ENCODE measurements at regions of chr12 and their contacts with region 1.

Region 1: DNA sequence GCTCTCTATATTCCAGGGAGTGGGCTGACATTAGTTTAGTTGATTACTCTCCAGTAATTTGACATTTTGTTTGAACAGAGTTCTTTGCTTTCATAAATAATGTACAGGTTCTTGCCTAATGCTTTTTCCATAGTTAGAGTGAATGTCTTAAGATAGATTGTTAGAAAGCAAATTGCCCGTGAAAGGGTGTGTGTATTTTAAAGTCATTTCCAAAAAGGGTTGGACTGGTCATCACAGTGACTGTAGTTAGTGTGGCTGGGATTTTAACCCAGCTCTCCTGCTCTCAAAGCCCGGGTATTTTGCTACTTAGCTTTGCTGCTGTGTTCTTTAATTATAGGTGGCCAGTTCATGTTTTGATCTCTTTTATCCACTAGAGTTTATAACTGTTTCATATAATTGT is 74.2 kb downstream of the DNAH10 start:
- DNase-seq: no peak
- ATAC-seq: no peak
- H3K4me3 ChIP-seq: no peak overlapping the region
- H3K27ac ChIP-seq: no peak overlapping the region
- H3K4me1 ChIP-seq: peaks cover 18% of the 10 kb centered on the region
- H3K27me3 ChIP-seq: no peaks in the 10 kb centered on the region
- CTCF ChIP-seq: no peak
- EP300 ChIP-seq: no peak
- POLR2A ChIP-seq: no peak
- RAD21 ChIP-seq: no peak

Region 2: DNA sequence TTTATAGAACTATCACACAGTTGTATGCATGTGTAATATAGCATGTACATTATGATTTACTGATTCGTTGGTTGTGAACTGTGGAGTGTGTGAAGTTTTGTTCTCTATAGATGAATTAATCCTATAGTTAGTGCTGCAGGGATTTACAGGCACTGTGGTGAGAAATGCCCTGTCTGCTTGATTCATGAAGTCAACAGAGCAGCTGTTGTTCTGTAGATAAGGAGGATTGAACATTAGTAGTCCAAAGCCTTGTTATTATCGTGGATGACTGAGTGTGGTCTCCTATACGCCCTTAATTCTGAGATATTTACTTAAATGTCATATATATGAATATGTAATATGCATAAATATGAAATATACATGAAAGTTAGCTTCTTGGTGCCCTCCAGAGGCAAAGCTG is 24.1 kb after region 1 on chr12:
- CTCF ChIA-PET with region 1: no interaction called
- POLR2A ChIA-PET with region 1: no interaction called
- in situ Hi-C with region 1: no loop called
- intact Hi-C with region 1: loop called (anchors 1 kb)
- DNase-seq: no peak
- ATAC-seq: no peak
- H3K4me3 ChIP-seq: no peak overlapping the region
- H3K27ac ChIP-seq: no peak overlapping the region
- H3K4me1 ChIP-seq: no peaks in the 10 kb centered on the region
- H3K27me3 ChIP-seq: peaks cover 1 to 6% of the 10 kb centered on the region in 2 experiments; a peak in 2 of 5 replicates
- CTCF ChIP-seq: no peak
- EP300 ChIP-seq: no peak
- POLR2A ChIP-seq: no peak
- RAD21 ChIP-seq: no peak